Tibial artery (tissue), 4 donors: ENCODE measurements at regions of chr6 and their contacts with region 1.

Region 1: DNA sequence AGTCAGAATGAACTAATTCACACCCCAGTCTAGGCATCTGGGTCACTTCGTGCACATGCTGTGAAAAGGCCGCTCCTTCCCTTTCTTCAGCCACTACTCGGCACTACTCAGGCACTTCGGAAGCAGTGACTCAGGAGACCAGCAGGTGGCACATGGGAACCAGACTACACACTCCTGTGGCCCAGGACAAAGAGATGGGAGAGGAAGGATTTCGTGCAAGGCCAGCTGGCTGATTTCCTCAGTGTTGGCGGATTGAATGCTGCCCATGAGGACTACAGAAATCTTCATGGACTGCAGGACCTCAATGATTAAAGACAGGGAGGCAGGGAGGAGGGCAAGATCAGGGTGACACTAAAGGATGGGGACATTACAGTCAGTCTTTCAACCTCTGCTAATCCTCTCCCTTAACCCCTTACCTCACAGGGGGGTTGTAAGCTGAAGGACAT is 117.8 kb upstream of the SPACA1 start:
- DNase-seq: peak; percentile 91 to 92
- H3K4me3 ChIP-seq: no peak overlapping the region
- H3K27ac ChIP-seq: no peak overlapping the region
- H3K4me1 ChIP-seq: peaks cover 0 to 10% (median 4%) of the 10 kb centered on the region in 4 donors
- H3K27me3 ChIP-seq: no peaks in the 10 kb centered on the region
- CTCF ChIP-seq: peak; percentile 87 to 94

Region 2: GRCh38 chr6:87714093-87714809 is 215.6 kb before region 1 on chr6:
- intact Hi-C with region 1: no loop called
- DNase-seq: no peak
- H3K4me3 ChIP-seq: no peak overlapping the region
- H3K27ac ChIP-seq: no peak overlapping the region
- H3K4me1 ChIP-seq: no peaks in the 10 kb centered on the region
- H3K27me3 ChIP-seq: no peaks in the 10 kb centered on the region
- CTCF ChIP-seq: no peak

Region 3: DNA sequence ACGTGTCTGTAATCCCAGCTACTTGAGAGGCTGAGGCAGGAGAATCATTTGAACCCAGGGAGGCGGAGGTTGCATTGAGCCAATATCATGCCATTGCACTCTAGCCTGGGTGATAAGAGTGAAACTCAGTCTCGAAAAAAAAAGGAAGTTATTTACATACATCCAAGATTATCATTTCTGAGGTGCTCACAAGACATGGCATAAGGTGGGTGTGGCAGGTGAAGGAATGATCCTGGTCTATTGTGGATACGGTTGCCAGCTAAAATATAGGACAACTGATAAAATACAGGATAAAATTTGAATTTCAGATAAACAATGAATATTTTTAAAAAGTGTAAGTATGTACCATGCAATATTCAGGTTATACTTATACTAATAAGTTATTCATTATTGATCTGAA is 73.4 kb before region 1 on chr6:
- intact Hi-C with region 1: no loop called
- DNase-seq: no peak
- H3K4me3 ChIP-seq: no peak overlapping the region
- H3K27ac ChIP-seq: no peak overlapping the region
- H3K4me1 ChIP-seq: no peaks in the 10 kb centered on the region
- H3K27me3 ChIP-seq: no peaks in the 10 kb centered on the region
- CTCF ChIP-seq: no peak

Region 4: DNA sequence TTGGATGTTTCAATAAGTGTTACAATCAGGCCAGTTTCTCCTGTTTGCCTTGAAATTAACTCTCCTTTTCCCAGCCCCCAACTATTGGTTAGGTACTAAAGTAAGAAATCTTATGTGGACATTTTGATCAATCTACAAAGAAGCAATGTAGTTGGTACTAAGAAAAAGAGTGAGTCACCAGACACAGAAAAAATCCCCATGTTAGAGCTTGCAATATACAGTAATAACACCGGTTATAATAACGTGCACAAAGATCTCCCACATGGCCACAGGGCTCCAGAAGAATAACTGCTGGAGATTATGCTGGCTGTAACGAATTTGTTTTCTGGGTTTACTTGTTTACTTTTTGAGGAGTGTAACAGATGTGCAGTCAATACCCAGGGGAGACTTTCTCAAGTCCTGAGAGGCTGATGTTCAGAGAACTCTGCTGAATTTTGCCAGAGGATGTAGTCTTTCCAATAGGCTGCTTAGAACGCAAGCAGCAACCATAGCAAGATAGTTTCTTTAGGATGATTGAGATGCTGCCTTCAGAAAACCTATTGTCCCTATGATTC is 48.4 kb before region 1 on chr6:
- intact Hi-C with region 1: no loop called
- DNase-seq: no peak
- H3K4me3 ChIP-seq: no peak overlapping the region
- H3K27ac ChIP-seq: no peak overlapping the region
- H3K4me1 ChIP-seq: no peaks in the 10 kb centered on the region
- H3K27me3 ChIP-seq: peaks cover 0 to 6% of the 10 kb centered on the region in 2 donors
- CTCF ChIP-seq: no peak

Region 5: DNA sequence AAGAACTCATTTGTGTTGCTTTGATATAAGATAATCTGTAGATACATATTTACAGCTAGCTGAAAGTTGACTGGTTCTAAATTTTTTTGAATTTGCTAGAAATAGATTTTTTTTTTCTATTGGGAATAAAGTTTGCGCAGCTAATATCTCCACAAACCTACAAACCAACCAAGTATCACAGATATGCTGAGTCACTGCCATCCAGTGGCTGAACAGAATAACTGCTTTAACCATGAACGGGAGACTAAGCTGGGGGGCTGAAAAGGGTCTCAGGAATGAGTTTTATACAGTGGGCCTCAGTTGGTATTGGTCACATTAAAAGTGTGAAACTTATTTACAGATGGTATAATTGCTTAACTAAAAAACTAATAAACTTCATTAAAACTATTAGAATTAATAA is 563.0 kb after region 1 on chr6:
- intact Hi-C with region 1: loop called (anchors 5 kb)
- DNase-seq: no peak
- H3K4me3 ChIP-seq: no peak overlapping the region
- H3K27ac ChIP-seq: peak overlapping the region in 1 of 2 donors; percentile 51
- H3K4me1 ChIP-seq: peaks cover 0 to 47% (median 1%) of the 10 kb centered on the region in 4 donors
- H3K27me3 ChIP-seq: no peaks in the 10 kb centered on the region
- CTCF ChIP-seq: peak; percentile 51 to 55

Region 6: DNA sequence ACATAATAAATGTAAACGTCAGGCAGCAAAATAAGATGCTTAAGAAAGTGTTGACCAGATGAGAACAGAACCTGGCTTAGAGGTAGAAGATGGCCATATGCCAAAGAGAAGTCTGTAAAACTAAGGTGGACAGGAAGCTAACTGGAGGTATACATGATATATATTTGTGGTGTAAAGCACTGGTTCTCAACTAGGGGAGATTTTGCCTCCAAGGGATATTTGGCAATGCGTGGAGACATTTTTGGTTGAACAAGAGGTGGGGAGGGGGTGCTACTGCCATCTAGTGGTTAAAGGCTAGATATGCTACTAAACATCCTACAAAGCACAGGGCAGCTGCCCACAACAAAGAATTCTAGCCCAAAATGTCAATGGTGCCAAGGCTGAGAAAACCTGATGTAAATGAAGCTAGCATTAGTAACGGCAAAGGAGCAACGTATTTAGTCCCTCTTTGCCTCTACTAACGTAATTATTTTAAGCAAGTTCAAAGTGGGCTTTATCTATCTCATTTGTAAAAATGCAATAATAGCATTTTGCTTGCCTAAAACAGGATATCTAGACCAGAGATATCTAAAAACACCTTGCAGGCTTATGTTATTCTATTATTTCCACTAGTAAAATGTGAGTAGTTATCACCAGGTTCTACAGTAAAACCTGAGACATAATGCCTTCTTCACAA is 851.0 kb after region 1 on chr6:
- intact Hi-C with region 1: loop called (anchors 5 kb)
- DNase-seq: peak in 1 of 2 donors; percentile 21
- H3K4me3 ChIP-seq: no peak overlapping the region
- H3K27ac ChIP-seq: no peak overlapping the region
- H3K4me1 ChIP-seq: no peaks in the 10 kb centered on the region
- H3K27me3 ChIP-seq: no peaks in the 10 kb centered on the region
- CTCF ChIP-seq: peak; percentile 84 to 94

Region 7: GRCh38 chr6:88870717-88871330 is 941.0 kb after region 1 on chr6:
- intact Hi-C with region 1: loop called (anchors 5 kb)
- DNase-seq: no peak
- H3K4me3 ChIP-seq: no peak overlapping the region
- H3K27ac ChIP-seq: peak overlapping the region in 1 of 2 donors; percentile 23
- H3K4me1 ChIP-seq: peaks cover 0 to 40% (median 13%) of the 10 kb centered on the region in 4 donors
- H3K27me3 ChIP-seq: no peaks in the 10 kb centered on the region
- CTCF ChIP-seq: peak; percentile 63 to 74